CD4-positive, alpha-beta memory T cell (primary cell): ENCODE measurements at regions of chr19 and their contacts with region 1.

Region 1: DNA sequence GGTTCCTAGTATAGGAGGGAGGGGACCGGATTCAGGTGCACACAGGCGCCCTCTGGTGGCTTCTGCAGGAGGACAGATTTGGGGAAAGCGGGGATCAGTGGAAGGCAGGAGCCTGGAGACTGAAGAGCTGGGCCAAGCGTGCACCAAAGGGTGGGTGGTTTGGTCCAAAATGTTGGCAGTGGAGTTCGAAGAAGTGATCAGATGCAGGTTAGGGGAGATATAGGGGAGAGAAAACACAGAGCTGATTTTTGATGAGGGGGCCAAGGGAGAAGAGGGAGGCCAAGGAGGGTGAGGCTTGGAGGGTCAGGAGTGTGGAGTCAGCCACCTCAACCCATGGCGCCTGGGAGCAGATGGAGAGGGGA is 6.8 kb upstream of the CARM1 start:
- DNase-seq: peak; percentile 72 to 76 (median 74)
- H3K4me3 ChIP-seq: no peak overlapping the region
- H3K4me3 Mint-ChIP-seq: peak overlapping the region in 3 of 8 donors; percentile 41 to 64 (median 59)
- H3K27ac ChIP-seq: no peak overlapping the region
- H3K27ac Mint-ChIP-seq: peak overlapping the region in 6 of 7 donors; percentile 3 to 87 (median 45)
- H3K4me1 ChIP-seq: peaks cover 9% of the 10 kb centered on the region
- H3K4me1 Mint-ChIP-seq: peaks cover 5 to 19% (median 14%) of the 10 kb centered on the region in 4 donors
- H3K27me3 ChIP-seq: no peaks in the 10 kb centered on the region
- H3K27me3 Mint-ChIP-seq: no peaks in the 10 kb centered on the region

Region 2: GRCh38 chr19:10553943-10554381 is 310.6 kb before region 1 on chr19:
- CTCF ChIA-PET with region 1: no interaction called
- POLR2A ChIA-PET with region 1: no interaction called
- intact Hi-C with region 1: no loop called
- DNase-seq: peak; percentile 63 to 73 (median 68)
- H3K4me3 ChIP-seq: peak overlapping the region; percentile 2 to 22
- H3K4me3 Mint-ChIP-seq: peak overlapping the region; percentile 45 to 86 (median 82)
- H3K27ac ChIP-seq: peak overlapping the region; percentile 53
- H3K27ac Mint-ChIP-seq: peak overlapping the region; percentile 90 to 97 (median 93)
- H3K4me1 ChIP-seq: peaks cover 51% of the 10 kb centered on the region
- H3K4me1 Mint-ChIP-seq: peaks cover 20 to 56% (median 36%) of the 10 kb centered on the region in 4 donors
- H3K27me3 ChIP-seq: no peaks in the 10 kb centered on the region
- H3K27me3 Mint-ChIP-seq: no peaks in the 10 kb centered on the region

Region 3: GRCh38 chr19:10797541-10798256 is 66.8 kb before region 1 on chr19:
- CTCF ChIA-PET with region 1: interaction called, 3 read pairs
- POLR2A ChIA-PET with region 1: no interaction called
- intact Hi-C with region 1: loop called (anchors 1 kb)
- DNase-seq: peak; percentile 85 to 97 (median 88)
- H3K4me3 ChIP-seq: peak overlapping the region in 1 of 2 donors; percentile 29
- H3K4me3 Mint-ChIP-seq: peak overlapping the region; percentile 78 to 90 (median 86)
- H3K27ac ChIP-seq: peak overlapping the region; percentile 75
- H3K27ac Mint-ChIP-seq: peak overlapping the region; percentile 97 to 99 (median 98)
- H3K4me1 ChIP-seq: peaks cover 40% of the 10 kb centered on the region
- H3K4me1 Mint-ChIP-seq: peaks cover 20 to 45% (median 29%) of the 10 kb centered on the region in 4 donors
- H3K27me3 ChIP-seq: no peaks in the 10 kb centered on the region
- H3K27me3 Mint-ChIP-seq: no peaks in the 10 kb centered on the region

Region 4: GRCh38 chr19:10820173-10820572 is 44.3 kb before region 1 on chr19:
- CTCF ChIA-PET with region 1: interaction called, 10 read pairs
- POLR2A ChIA-PET with region 1: no interaction called
- intact Hi-C with region 1: no loop called
- DNase-seq: no peak
- H3K4me3 ChIP-seq: no peak overlapping the region
- H3K4me3 Mint-ChIP-seq: no peak overlapping the region
- H3K27ac ChIP-seq: no peak overlapping the region
- H3K27ac Mint-ChIP-seq: peak overlapping the region; percentile 29 to 97 (median 78)
- H3K4me1 ChIP-seq: no peaks in the 10 kb centered on the region
- H3K4me1 Mint-ChIP-seq: peaks cover 0 to 3% (median 3%) of the 10 kb centered on the region in 4 donors
- H3K27me3 ChIP-seq: no peaks in the 10 kb centered on the region
- H3K27me3 Mint-ChIP-seq: no peaks in the 10 kb centered on the region

Region 5: DNA sequence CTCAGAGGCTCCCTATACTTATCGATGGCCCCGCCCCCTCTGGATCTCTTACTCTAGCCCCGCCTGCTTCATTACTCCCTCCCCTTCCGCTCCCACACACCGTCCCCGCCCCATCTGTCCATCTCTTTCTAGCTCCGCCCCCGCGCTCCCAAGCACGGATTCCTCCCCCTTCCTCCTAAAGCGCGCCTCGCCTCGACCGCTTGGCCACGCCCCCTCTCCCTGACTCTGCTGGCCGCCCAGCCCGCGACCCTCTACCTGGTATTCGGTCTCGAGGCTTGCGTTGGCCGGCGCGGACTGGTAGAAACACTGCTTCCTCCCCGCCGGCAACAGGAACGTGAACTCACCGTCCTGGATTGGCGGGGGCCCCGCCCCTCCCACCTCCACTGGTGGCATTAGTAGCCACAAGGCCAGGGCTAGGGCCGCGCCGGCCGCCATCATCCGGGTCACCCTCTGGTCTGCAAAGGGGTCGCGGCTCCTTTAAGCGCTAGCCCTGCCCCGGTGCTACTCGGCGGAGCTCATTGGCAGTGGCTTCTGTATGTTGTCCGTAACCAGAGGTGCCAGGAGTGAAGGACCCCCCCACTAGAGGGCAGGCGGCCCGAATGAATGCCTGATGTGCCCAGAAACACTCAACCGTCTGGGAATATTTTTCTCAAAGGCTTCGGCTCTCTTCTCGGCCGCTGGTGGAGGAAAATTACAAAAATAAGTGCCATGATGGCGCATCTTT is 28.6 kb before region 1 on chr19 and contains the start of gene TMED1:
- CTCF ChIA-PET with region 1: interaction called, 67 read pairs
- POLR2A ChIA-PET with region 1: interaction called, 20 read pairs
- intact Hi-C with region 1: no loop called
- DNase-seq: peak; percentile 94 to 95 (median 94)
- H3K4me3 ChIP-seq: peak within 1 kb of the TSS; percentile 64 to 89
- H3K4me3 Mint-ChIP-seq: peak within 1 kb of the TSS; percentile 96 to 100 (median 98)
- H3K27ac ChIP-seq: peak within 1 kb of the TSS; percentile 95
- H3K27ac Mint-ChIP-seq: peak within 1 kb of the TSS; percentile 99 to 100 (median 100)
- H3K4me1 ChIP-seq: peaks cover 17% of the 10 kb centered on the region
- H3K4me1 Mint-ChIP-seq: peaks cover 9 to 21% (median 13%) of the 10 kb centered on the region in 4 donors
- H3K27me3 ChIP-seq: no peaks in the 10 kb centered on the region
- H3K27me3 Mint-ChIP-seq: no peaks in the 10 kb centered on the region
- total RNA-seq, gene TMED1: 9.0 to 10.9 TPM

Region 6: DNA sequence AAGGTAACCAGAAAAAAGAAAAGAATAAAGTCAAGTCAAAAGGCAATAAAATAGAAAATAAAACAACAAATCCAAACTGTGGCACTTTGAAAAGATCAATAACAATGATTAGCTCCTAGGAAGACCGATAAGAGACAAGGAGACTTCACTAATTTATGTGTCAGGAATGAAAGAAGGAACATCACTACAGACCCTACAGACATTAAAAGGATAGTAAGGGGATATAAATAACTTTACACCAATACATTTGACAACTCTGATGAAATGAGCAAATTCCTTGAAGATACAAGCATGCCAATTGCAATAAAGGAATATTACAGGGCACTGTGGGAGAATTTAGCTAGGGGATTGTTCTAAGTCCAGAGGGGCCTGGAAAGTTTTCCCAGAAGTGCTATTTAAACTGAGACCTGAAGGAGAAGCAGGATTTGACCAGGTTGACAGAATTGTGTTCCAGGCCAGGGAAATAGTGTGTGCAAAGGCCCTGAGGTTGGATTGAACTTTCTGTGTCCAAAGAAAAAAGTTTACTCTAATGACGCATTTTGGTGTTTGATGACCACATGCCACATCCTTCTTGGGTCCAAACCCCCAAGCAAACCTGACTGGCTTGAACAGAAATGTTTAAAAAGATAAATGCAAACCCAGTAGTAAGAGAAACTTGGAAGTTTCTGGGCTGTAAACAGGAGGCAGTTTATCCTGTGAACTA is 17.9 kb before region 1 on chr19:
- CTCF ChIA-PET with region 1: interaction called, 45 read pairs
- POLR2A ChIA-PET with region 1: no interaction called
- intact Hi-C with region 1: no loop called
- DNase-seq: no peak
- H3K4me3 ChIP-seq: no peak overlapping the region
- H3K4me3 Mint-ChIP-seq: no peak overlapping the region
- H3K27ac ChIP-seq: no peak overlapping the region
- H3K27ac Mint-ChIP-seq: no peak overlapping the region
- H3K4me1 ChIP-seq: no peaks in the 10 kb centered on the region
- H3K4me1 Mint-ChIP-seq: peaks cover 0 to 4% (median 2%) of the 10 kb centered on the region in 4 donors
- H3K27me3 ChIP-seq: no peaks in the 10 kb centered on the region
- H3K27me3 Mint-ChIP-seq: peaks cover 0 to 2% of the 10 kb centered on the region in 2 donors